ENCODE measurements at regions of chr2 and their contacts with region 1.

Region 1: DNA sequence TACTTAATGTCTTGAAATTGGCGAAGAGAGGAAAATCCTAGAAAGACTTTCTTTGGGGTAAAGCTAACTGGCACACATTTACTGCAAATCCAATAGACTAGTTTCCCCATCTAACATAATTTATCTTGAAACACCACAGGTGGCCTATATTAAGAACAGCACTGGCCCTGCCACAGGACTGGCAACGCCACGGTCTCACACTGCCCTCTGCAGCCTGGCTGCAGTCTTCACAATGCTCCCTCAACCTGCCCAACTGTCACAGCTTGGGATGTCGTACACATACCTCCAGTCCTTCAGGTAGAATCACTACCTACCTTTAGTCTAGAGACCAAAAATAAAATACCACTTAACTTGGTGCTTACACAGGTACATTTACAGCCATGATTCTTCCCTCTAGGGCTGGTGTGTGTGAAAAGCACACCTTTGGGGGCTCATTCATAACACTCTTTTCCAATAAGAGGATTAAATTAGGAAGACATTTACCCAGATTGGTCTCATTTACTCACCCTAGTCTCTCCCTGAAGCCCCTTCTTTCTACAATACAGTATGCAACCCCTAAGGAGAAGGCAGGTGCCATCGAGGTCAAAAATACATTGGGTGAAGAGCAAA is 222.2 kb downstream of the C1D start:
- DNase-seq: peak; percentile 77 to 80
- H3K4me3 ChIP-seq: no peak overlapping the region
- H3K27ac ChIP-seq: no peak overlapping the region
- H3K4me1 ChIP-seq: no peaks in the 10 kb centered on the region
- H3K27me3 ChIP-seq: no peaks in the 10 kb centered on the region
- CTCF ChIP-seq: peak; percentile 81 to 92 (median 86)
- POLR2A ChIP-seq: no peak

Region 2: DNA sequence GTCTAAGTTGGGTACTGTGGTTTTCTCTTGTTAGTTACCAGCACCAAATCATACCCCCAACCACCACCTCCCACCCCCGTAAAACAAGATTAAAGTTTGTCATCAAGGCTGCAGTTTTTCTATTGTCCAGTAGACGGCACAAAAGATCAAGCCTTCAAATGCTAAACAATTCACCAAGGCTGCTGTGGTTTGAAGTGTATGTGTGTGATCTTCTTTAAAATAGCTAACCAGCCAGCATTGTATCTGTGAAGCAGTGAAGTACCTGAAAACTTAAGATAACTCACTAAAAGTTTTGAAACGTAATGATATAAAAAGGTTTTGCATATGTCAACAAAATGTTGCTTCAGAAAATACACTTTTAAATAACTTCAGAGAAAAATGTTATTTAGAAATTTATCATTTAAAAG is 1411.5 kb before region 1 on chr2:
- intact Hi-C with region 1: loop called (anchors 10 kb)
- DNase-seq: peak in 1 of 2 donors; percentile 50
- H3K4me3 ChIP-seq: no peak overlapping the region
- H3K27ac ChIP-seq: no peak overlapping the region
- H3K4me1 ChIP-seq: no peaks in the 10 kb centered on the region
- H3K27me3 ChIP-seq: no peaks in the 10 kb centered on the region
- CTCF ChIP-seq: peak; percentile 87 to 92 (median 89)
- POLR2A ChIP-seq: no peak

Region 3: GRCh38 chr2:67671464-67672450 is 168.8 kb before region 1 on chr2:
- intact Hi-C with region 1: loop called (anchors 10 kb)
- DNase-seq: no peak
- H3K4me3 ChIP-seq: no peak overlapping the region
- H3K27ac ChIP-seq: no peak overlapping the region
- H3K4me1 ChIP-seq: peaks cover 0 to 3% of the 10 kb centered on the region in 2 donors
- H3K27me3 ChIP-seq: no peaks in the 10 kb centered on the region
- CTCF ChIP-seq: no peak
- POLR2A ChIP-seq: no peak